ENCODE measurements at regions of chr17 and their contacts with region 1.

Region 1: DNA sequence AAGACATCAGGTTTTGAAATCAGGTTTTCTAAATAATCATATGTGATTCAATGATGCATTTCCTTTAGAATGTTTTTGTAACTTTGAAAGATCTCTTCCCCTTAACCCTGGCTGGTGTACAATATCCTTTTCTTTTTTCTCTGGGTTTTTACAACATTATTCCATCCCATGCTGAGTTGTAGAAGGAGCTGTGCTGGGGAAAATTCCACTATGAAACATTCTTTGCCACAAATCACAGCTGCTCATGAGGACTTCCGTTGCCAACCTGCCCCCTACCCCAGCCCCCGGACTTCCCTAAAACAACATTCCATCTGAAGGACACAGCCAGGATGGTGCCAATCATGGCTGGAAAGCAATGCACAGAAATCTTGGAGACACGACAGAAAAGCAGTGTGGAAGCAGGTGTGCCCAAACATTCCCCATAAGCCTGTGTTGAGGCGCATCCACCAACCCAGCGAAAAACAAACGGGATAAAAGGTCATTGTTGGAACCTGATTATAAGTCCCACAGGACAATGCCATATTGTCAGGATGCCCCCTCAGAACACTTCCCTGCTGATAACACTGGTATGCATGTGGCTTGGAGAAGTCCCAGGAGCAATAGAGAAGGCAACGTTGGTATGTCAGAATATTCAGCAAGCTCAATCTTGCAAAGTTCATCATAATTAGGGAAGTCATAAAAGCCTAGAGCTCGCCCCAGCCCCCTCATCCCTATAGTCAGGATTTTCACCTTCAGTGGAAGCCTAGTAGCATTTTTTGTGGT is 475.0 kb downstream of the HS3ST3B1 start:
- DNase-seq: no peak
- ATAC-seq: peak; percentile 32
- H3K4me3 ChIP-seq: no peak overlapping the region
- H3K27ac ChIP-seq: no peak overlapping the region
- H3K4me1 ChIP-seq: peaks cover 9% of the 10 kb centered on the region
- H3K27me3 ChIP-seq: no peaks in the 10 kb centered on the region
- CTCF ChIP-seq: no peak
- POLR2A ChIP-seq: no peak
- RAD21 ChIP-seq: no peak

Region 2: DNA sequence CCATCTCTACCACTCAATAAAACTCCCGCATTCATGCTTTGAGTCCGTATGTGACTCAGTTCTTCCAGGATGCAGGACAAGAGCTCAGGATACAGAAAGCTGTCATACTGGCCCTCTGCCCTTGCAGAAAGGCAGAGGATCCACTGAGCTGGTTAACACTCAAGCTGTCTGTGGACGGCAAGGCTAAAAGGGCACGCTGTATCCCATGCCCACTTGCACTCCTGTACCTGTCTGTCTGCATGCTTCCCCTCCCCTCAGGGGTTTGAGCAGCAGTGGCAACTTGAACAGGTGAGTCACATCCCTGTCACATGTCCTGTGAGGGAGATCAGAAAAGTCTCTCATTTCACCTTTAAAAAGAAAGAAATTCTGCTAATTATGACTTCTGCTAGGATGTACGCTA is 181.2 kb before region 1 on chr17:
- CTCF ChIA-PET with region 1: no interaction called
- POLR2A ChIA-PET with region 1: no interaction called
- dilution Hi-C with region 1: no loop called
- in situ Hi-C with region 1: no loop called
- intact Hi-C with region 1: no loop called
- DNase-seq: no peak
- ATAC-seq: no peak
- H3K4me3 ChIP-seq: no peak overlapping the region
- H3K27ac ChIP-seq: no peak overlapping the region
- H3K4me1 ChIP-seq: no peaks in the 10 kb centered on the region
- H3K27me3 ChIP-seq: peaks cover 20% of the 10 kb centered on the region
- CTCF ChIP-seq: no peak
- POLR2A ChIP-seq: no peak
- RAD21 ChIP-seq: no peak

Region 3: DNA sequence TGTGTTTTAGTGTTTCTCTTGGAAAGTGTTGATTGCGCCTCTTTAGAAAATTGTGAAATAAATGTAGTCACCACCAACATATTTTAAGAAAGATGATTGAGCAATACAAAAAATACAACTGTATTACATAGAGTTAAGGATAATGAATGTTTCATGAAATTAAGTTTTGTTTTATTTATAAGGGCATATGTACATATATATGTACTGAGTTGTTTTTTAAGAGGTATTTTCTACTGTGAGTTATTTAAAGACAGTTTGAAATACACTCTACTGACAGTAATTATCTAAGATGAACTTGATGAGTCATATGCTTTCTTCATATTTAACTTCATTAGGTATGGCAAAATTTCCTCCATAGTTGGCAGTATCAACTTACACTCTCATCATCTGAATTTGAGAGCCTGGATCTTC is 63.3 kb before region 1 on chr17:
- CTCF ChIA-PET with region 1: no interaction called
- POLR2A ChIA-PET with region 1: no interaction called
- dilution Hi-C with region 1: no loop called
- in situ Hi-C with region 1: loop called (anchors 10 kb)
- intact Hi-C with region 1: no loop called
- DNase-seq: no peak
- ATAC-seq: no peak
- H3K4me3 ChIP-seq: no peak overlapping the region
- H3K27ac ChIP-seq: no peak overlapping the region
- H3K4me1 ChIP-seq: no peaks in the 10 kb centered on the region
- H3K27me3 ChIP-seq: no peaks in the 10 kb centered on the region
- CTCF ChIP-seq: no peak
- POLR2A ChIP-seq: no peak
- RAD21 ChIP-seq: no peak

Region 4: DNA sequence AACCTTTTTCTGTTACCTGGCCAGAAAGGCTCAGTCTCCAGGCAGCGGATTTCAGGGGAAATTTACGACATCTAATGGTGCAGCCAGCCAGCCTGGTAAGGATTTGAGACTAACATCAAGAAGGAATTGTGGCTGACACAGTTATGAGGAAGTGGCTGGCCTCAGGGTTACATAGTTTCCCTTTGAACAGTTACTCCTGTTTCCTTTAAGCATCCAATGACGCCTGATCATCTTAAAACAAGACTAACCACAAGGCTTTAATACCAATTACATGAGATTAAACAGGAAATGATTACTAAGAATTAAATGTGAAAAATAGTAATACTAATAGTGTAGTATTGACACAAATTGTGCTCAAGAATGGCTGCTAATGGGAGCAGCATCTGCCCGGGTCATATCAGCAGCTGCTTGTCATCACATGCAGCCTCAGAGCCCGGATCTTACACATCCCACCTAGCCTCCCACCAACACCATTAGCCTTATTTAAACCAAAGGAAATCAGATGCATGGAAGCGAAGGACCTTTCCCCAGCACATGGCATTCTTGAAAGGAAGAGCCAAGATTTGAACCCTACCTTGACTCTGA is 57.4 kb after region 1 on chr17:
- CTCF ChIA-PET with region 1: no interaction called
- POLR2A ChIA-PET with region 1: no interaction called
- dilution Hi-C with region 1: no loop called
- in situ Hi-C with region 1: loop called (anchors 10 kb)
- intact Hi-C with region 1: no loop called
- DNase-seq: peak; percentile 94
- ATAC-seq: peak; percentile 95
- H3K4me3 ChIP-seq: no peak overlapping the region
- H3K27ac ChIP-seq: peak overlapping the region; percentile 49
- H3K4me1 ChIP-seq: peaks cover 10% of the 10 kb centered on the region
- H3K27me3 ChIP-seq: no peaks in the 10 kb centered on the region
- CTCF ChIP-seq: no peak
- POLR2A ChIP-seq: no peak
- RAD21 ChIP-seq: no peak

Region 5: GRCh38 chr17:15091825-15092224 is 315.9 kb after region 1 on chr17:
- CTCF ChIA-PET with region 1: no interaction called
- POLR2A ChIA-PET with region 1: no interaction called
- dilution Hi-C with region 1: no loop called
- in situ Hi-C with region 1: no loop called
- intact Hi-C with region 1: no loop called
- DNase-seq: no peak
- ATAC-seq: no peak
- H3K4me3 ChIP-seq: no peak overlapping the region
- H3K27ac ChIP-seq: no peak overlapping the region
- H3K4me1 ChIP-seq: no peaks in the 10 kb centered on the region
- H3K27me3 ChIP-seq: peaks cover 2% of the 10 kb centered on the region; the same call in 1 of the 2 replicates
- CTCF ChIP-seq: 0 out of 2 replicates have a peak, but pooled peaks have one; percentile 5
- POLR2A ChIP-seq: no peak
- RAD21 ChIP-seq: no peak